ENCODE measurements at regions of chr12 and their contacts with region 1.

Region 1: GRCh38 chr12:1583421-1584078 is 10.8 kb downstream of the FBXL14 start:
- H3K4me3 ChIP-seq: no peak overlapping the region
- H3K27ac ChIP-seq: no peak overlapping the region
- H3K4me1 ChIP-seq: peaks cover 8% of the 10 kb centered on the region
- CTCF ChIP-seq: peak; percentile 85

Region 2: GRCh38 chr12:818733-819132 is 764.8 kb before region 1 on chr12:
- CTCF ChIA-PET with region 1: interaction called, 20 read pairs
- POLR2A ChIA-PET with region 1: no interaction called
- H3K4me3 ChIP-seq: no peak overlapping the region
- H3K27ac ChIP-seq: no peak overlapping the region
- H3K4me1 ChIP-seq: no peaks in the 10 kb centered on the region
- CTCF ChIP-seq: no peak

Region 3: GRCh38 chr12:1517007-1517406 is 66.5 kb before region 1 on chr12:
- CTCF ChIA-PET with region 1: interaction called, 11 read pairs
- POLR2A ChIA-PET with region 1: no interaction called
- H3K4me3 ChIP-seq: no peak overlapping the region
- H3K27ac ChIP-seq: no peak overlapping the region
- H3K4me1 ChIP-seq: peaks cover 7% of the 10 kb centered on the region
- CTCF ChIP-seq: no peak

Region 4: DNA sequence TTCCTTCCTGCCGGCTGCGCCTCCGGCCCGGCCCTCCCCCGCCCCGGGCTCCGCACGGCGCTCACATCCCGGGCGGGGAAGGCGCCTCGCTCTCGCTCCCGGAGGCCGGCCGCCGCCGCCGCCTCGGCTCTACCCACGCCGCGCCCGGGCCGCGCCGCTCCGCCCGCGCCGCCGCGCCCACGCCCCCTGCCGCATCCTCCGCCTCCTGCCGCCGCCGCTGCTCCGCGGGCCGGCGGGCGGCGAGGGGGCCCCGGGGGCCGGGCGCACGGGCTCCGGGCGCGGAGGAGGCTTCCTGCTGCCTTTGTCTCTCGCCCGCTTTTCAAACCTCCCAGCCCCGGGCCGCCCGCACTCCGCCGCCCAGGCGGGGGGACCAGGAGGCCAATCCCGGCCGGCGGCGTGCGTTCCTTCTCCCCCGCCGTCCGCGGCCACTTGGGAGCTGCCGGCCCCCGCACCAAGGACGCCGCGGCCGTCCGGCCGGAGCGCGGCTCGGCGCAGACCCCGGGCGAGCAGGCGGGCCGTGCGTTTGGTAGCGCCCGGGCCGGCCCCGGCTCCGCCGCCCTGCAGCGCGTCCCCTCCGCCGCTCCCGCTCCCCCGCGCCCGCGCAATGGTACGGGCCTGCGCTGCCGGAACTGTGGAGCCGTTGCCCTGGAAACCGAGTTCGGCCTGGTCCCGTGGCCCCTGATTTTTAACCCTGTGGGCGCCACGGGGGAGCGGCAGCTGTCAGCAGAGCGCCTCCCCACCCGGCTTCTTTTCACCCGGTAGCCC is 10.9 kb after region 1 on chr12 and contains the start of gene FBXL14:
- CTCF ChIA-PET with region 1: interaction called, 12 read pairs
- POLR2A ChIA-PET with region 1: no interaction called
- H3K4me3 ChIP-seq: peak within 1 kb of the TSS; percentile 78
- H3K27ac ChIP-seq: peak within 1 kb of the TSS; percentile 97
- H3K4me1 ChIP-seq: peaks cover 18% of the 10 kb centered on the region
- CTCF ChIP-seq: no peak; the same call in none of the 2 replicates

Region 5: DNA sequence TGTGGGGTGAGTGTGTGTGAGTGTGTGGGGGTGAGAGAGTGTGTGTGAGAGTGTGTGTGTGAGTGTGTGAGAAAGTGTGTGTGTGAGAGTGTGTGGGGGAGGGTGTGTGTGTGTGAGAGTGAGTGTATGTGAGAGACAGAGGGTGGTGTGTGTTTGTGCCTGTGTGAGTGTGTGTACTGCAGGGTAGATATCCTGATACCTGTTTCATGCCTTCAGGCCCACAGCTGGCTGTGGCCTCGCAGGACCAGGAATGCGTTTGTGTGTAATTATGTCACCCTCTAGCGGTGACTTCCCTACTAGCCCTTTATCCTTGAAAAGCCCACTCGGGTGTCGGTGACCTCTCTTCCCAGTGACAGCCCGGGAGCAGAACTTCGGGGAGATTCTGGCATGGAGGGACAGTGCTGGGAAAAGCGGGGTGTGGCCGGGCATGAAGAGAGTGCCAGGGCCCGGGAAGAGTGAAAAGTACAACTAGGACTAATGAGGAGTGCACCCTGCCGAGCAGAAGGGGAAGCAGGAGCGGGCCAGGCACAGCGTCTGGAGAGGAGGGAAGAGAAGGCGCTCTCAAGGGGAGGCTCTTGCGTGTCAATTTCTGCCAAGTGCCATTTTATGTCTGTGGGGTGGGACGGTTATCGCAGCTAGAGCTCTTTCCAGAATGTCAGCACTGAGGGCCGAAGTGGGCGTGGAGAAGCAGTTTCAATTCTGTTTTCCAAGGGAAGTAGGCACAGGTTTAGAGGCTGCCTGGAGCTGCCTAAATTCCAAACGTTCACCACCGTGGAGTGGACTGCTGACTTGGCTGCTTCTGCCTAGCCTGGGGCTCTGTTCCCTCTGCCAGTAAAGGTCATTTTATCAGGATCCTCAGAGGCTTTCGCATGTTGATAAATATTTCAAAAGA is 21.8 kb after region 1 on chr12:
- CTCF ChIA-PET with region 1: interaction called, 12 read pairs
- POLR2A ChIA-PET with region 1: interaction called, 3 read pairs
- H3K4me3 ChIP-seq: peak overlapping the region; percentile 47
- H3K27ac ChIP-seq: peak overlapping the region; percentile 78
- H3K4me1 ChIP-seq: peaks cover 6% of the 10 kb centered on the region; the same call in 1 of the 2 replicates
- CTCF ChIP-seq: peak; percentile 97

Region 6: DNA sequence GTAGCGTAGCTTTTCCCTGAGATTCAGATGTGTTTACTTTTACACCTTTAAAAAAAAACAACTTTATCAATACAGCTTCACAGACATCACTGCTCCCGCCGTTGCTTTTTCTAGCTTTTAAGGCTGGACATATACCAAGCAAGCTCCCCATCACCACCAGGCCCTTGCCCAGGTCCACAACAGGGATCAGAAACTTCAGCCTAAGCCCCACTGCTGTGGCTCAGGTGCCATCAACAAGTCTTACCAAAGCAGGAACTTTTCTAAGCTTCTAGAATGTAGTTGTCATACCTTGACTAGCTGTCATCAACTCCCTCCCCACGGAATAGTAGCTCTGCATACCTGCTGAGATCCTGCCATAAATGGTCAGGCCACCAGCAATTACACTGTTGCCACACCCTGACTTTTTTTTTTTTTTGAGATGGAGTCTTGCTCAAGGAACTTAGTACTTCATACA is 87.3 kb after region 1 on chr12:
- CTCF ChIA-PET with region 1: no interaction called
- POLR2A ChIA-PET with region 1: no interaction called
- H3K4me3 ChIP-seq: no peak overlapping the region
- H3K27ac ChIP-seq: no peak overlapping the region
- H3K4me1 ChIP-seq: peaks cover 9% of the 10 kb centered on the region; the same call in 1 of the 2 replicates
- CTCF ChIP-seq: no peak